Activated CD4-positive, alpha-beta memory T cell treated with anti-CD3 and anti-CD28 coated beads for 36 hours (primary cell): ENCODE measurements at regions of chr2 and their contacts with region 1.

Region 1: DNA sequence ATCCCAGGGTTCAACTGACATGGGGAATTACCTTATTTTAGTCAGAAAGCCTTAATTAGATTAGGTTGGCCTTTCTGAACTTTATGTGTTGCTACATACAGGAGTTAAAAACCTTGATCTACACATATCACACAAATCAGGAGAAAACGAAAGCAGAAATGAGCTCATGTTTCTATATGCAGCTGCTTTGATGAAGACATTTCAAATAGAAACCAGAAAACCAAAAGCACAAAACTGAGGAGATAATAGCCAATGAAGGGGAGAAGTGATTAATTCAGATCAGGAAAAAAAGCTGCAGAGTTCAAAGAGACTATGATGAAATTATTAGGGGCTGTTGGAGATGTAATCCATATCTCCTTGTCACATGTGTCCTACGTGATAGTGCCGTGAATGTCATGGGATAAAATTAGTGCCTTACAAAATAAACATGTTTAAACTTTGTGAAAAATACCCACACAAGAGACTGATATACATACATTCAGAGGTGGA is 255.0 kb downstream of the CAMKMT start:
- DNase-seq: no peak
- H3K4me3 Mint-ChIP-seq: no peak overlapping the region
- H3K27ac Mint-ChIP-seq: no peak overlapping the region
- H3K4me1 Mint-ChIP-seq: peaks cover 6% of the 10 kb centered on the region
- H3K27me3 Mint-ChIP-seq: no peaks in the 10 kb centered on the region

Region 2: DNA sequence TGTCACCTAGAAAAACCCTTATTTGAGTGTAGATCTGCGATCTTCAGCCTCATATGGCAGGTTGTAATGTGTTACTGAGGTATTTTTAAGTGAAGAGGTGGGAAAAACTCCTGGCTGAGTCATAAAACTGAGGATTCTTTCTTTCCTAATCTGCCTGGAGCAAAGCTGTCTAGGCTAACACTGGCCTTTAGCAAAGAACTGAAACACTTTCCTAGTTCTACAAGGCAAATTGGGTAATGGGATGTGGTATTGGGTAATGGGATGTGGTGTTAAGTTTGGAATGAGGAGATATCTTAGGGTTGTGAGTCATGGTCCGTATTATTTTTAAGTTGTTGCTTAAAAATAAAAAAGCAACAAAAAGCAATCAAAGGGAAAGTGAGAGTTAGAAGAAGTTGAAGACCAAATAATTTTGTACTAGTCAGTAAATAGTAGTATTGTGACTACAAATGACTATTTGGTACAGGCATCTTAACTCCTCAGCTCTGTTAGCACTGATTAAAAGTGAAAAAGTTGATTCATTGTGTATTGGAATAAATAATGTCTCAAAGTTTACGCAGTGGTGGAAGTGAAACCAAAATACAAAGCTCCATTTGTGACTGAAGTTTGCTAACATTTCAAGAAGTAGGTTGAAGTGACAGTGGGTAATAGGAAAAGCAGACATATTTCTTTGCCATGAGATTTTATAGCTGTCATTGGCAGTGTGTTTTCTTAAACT is 38.1 kb before region 1 on chr2:
- CTCF ChIA-PET with region 1: interaction called, 11 read pairs
- POLR2A ChIA-PET with region 1: interaction called, 11 read pairs
- intact Hi-C with region 1: loop called (anchors 1 kb)
- DNase-seq: no peak
- H3K4me3 Mint-ChIP-seq: peak overlapping the region; percentile 4
- H3K27ac Mint-ChIP-seq: no peak overlapping the region
- H3K4me1 Mint-ChIP-seq: peaks cover 32% of the 10 kb centered on the region
- H3K27me3 Mint-ChIP-seq: no peaks in the 10 kb centered on the region

Region 3: DNA sequence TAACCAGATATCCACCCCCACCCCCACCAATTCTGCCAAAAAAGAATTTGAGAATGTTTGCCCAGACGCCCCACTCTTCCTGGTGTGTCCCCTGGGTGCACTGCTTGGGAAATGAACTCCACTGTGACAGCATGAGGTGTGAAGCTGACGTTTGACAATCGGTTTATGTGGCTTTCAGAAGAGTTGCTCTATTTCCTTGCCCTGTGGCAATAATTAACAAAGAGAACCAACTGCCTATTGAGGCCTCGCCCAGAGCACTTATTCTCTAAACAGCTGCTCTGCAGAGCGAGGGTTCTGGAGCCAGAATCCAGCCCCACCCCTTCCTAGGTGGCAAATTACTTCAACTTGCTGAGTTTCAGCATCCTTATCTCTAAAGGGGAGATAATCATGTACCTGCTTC is 209.0 kb after region 1 on chr2:
- CTCF ChIA-PET with region 1: no interaction called
- POLR2A ChIA-PET with region 1: no interaction called
- intact Hi-C with region 1: no loop called
- DNase-seq: no peak
- H3K4me3 Mint-ChIP-seq: no peak overlapping the region
- H3K27ac Mint-ChIP-seq: no peak overlapping the region
- H3K4me1 Mint-ChIP-seq: no peaks in the 10 kb centered on the region
- H3K27me3 Mint-ChIP-seq: peaks cover 1% of the 10 kb centered on the region